Activated CD4-positive, alpha-beta memory T cell treated with anti-CD3 and anti-CD28 coated beads for 36 hours (primary cell): ENCODE measurements at regions of chr9 and their contacts with region 1.

Region 1: GRCh38 chr9:78053627-78054026 is 22.0 kb upstream of the GNAQ start:
- DNase-seq: peak; percentile 27
- H3K4me3 Mint-ChIP-seq: no peak overlapping the region
- H3K27ac Mint-ChIP-seq: no peak overlapping the region
- H3K4me1 Mint-ChIP-seq: peaks cover 19% of the 10 kb centered on the region
- H3K27me3 Mint-ChIP-seq: no peaks in the 10 kb centered on the region

Region 2: GRCh38 chr9:78074385-78075291 is 21.0 kb after region 1 on chr9:
- CTCF ChIA-PET with region 1: no interaction called
- POLR2A ChIA-PET with region 1: no interaction called
- intact Hi-C with region 1: loop called (anchors 2 kb)
- DNase-seq: peak; percentile 45
- H3K4me3 Mint-ChIP-seq: peak overlapping the region; percentile 3
- H3K27ac Mint-ChIP-seq: peak overlapping the region; percentile 77
- H3K4me1 Mint-ChIP-seq: peaks cover 49% of the 10 kb centered on the region
- H3K27me3 Mint-ChIP-seq: no peaks in the 10 kb centered on the region